Activated B cell treated with CpG ODN at 0.5 μM for 24 hours (primary cell): ENCODE measurements at regions of chr3 and their contacts with region 1.

Region 1: DNA sequence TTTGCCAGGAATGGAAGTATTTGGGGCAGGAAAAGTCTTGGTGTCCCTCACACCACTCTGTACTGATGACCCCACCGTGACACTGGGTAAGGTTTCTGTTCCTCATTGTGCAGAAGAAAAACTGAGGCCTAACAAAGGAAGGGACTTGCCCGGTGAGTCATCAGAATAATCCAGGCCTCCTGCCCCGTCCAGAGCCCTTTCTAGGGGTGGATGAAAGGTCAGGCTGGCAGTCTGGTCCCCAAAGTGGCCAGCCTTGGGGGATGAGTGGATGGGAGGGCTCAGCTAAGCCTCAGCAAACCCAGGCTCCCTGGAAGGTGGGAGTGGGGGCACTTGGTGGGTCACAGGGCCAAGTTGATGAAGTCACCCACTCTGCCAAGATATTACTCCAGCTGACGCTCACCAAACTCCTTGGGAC is 2.3 kb upstream of the DNAH1 start:
- DNase-seq: peak; percentile 55
- ATAC-seq: peak; percentile 77
- H3K4me3 Mint-ChIP-seq: peak overlapping the region; percentile 55
- H3K27ac Mint-ChIP-seq: peak overlapping the region; percentile 87
- H3K4me1 Mint-ChIP-seq: peaks cover 78% of the 10 kb centered on the region
- H3K27me3 Mint-ChIP-seq: no peaks in the 10 kb centered on the region
- CTCF ChIP-seq: no peak

Region 2: GRCh38 chr3:52270252-52270754 is 43.5 kb before region 1 on chr3:
- CTCF ChIA-PET with region 1: no interaction called
- POLR2A ChIA-PET with region 1: no interaction called
- intact Hi-C with region 1: no loop called
- DNase-seq: no peak
- ATAC-seq: no peak
- H3K4me3 Mint-ChIP-seq: peak overlapping the region; percentile 41
- H3K27ac Mint-ChIP-seq: peak overlapping the region; percentile 76
- H3K4me1 Mint-ChIP-seq: peaks cover 79% of the 10 kb centered on the region
- H3K27me3 Mint-ChIP-seq: no peaks in the 10 kb centered on the region
- CTCF ChIP-seq: no peak

Region 3: DNA sequence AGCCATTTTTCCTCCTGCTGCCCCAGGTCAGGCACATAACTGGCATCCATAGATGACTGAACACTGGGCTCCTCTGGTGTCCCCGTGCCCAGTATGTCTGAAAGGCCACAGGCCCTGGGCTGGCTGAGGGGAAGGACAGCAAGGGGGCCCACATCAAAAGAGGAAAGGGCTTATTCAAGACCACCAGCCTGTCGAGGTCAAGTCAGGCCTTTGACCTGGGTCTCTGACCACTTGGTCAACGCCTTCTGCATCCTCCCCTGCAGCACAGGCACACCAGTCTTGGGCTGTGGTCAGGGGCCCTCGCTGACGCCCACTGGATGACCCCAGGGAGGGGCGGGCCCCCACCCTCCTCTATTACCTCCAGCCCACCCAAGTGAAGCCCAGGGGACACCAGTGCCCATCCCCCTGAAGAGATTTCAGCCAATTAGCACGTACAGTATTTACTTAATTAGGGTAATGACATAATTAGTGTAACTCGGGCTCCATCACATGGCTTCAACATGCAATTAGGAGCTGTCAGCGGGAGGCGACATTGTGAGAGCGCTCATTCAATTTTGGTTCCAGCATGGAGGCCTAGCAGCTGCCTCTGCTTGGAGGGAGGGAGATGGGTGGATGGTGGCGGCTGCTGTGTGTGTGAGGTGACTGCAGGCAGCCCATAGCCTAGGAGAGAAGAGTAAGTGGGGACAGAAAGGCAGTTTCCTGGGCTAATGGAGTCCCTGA is 11.2 kb before region 1 on chr3:
- CTCF ChIA-PET with region 1: no interaction called
- POLR2A ChIA-PET with region 1: interaction called, 4 read pairs
- intact Hi-C with region 1: loop called (anchors 2 kb)
- DNase-seq: no peak
- ATAC-seq: no peak
- H3K4me3 Mint-ChIP-seq: no peak overlapping the region
- H3K27ac Mint-ChIP-seq: no peak overlapping the region
- H3K4me1 Mint-ChIP-seq: peaks cover 10% of the 10 kb centered on the region
- H3K27me3 Mint-ChIP-seq: no peaks in the 10 kb centered on the region
- CTCF ChIP-seq: no peak